PC-9 (cell line): ENCODE measurements at regions of chr21 and their contacts with region 1.

Region 1: GRCh38 chr21:37410639-37411038 is 44.1 kb downstream of the DYRK1A start:
- DNase-seq: no peak
- H3K4me3 ChIP-seq: no peak overlapping the region
- H3K27ac ChIP-seq: no peak overlapping the region
- H3K4me1 ChIP-seq: no peaks in the 10 kb centered on the region
- H3K27me3 ChIP-seq: no peaks in the 10 kb centered on the region
- CTCF ChIP-seq: no peak

Region 2: GRCh38 chr21:37445228-37445627 is 34.6 kb after region 1 on chr21:
- CTCF ChIA-PET with region 1: no interaction called
- POLR2A ChIA-PET with region 1: no interaction called
- intact Hi-C with region 1: loop called (anchors 2 kb)
- DNase-seq: no peak
- H3K4me3 ChIP-seq: no peak overlapping the region
- H3K27ac ChIP-seq: no peak overlapping the region
- H3K4me1 ChIP-seq: peaks cover 11% of the 10 kb centered on the region
- H3K27me3 ChIP-seq: no peaks in the 10 kb centered on the region
- CTCF ChIP-seq: no peak